ENCODE measurements at regions of chr4 and their contacts with region 1.

Region 1: GRCh38 chr4:3388471-3389232 is 53.1 kb upstream of the HGFAC start:
- DNase-seq: no peak
- ATAC-seq: peak; percentile 72
- H3K4me3 Mint-ChIP-seq: peak overlapping the region; percentile 83
- H3K27ac Mint-ChIP-seq: peak overlapping the region; percentile 95
- H3K4me1 Mint-ChIP-seq: peaks cover 51% of the 10 kb centered on the region
- H3K27me3 Mint-ChIP-seq: peaks cover 5% of the 10 kb centered on the region
- CTCF ChIP-seq: no peak

Region 2: DNA sequence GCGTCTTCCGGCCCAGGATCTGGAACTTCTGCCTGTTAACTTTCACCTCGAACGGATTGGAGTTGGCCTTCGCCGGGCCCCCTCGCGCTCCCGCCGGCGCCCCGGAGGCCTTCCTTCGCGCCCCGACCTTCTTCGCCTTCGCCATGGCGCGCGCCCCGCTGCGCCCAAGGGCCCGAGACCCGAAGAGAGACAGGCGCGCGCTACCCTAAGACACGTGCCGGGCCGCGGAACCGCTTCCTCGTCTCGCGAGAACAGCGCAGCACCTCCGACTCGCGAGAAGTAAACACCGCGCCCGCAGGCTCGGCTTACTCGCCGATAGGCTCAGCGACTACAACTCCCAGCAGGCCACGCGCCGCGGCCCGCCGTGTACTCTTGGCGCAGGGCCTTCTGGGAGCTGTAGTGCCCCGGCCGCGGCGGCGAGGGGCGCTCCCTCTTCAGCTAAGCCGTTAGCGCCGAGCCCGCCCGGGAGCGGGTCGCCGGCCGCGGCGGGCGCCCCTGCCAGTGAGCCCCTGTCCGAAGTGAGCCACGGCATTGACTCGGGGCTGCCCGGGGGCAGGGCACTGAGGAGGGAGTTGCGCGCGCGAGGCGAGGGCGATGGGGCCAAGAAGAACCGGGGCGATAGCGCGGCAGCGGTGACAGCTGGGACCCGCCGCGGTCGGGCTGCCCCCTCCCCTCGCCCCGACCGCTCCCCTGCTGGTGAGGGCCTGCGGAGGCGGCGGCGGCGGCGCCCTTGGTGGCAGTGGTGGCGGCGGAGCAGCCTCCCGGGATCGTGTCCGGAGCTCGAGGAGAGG is 425.3 kb before region 1 on chr4 and contains the starts of genes GRK4 and NOP14:
- CTCF ChIA-PET with region 1: no interaction called
- POLR2A ChIA-PET with region 1: no interaction called
- intact Hi-C with region 1: loop called (anchors 5 kb)
- DNase-seq: peak; percentile 89
- ATAC-seq: peak; percentile 91
- H3K4me3 Mint-ChIP-seq: peak within 1 kb of the TSS; percentile 91
- H3K27ac Mint-ChIP-seq: peak within 1 kb of the TSS; percentile 92
- H3K4me1 Mint-ChIP-seq: peaks cover 29% of the 10 kb centered on the region
- H3K27me3 Mint-ChIP-seq: no peaks in the 10 kb centered on the region
- CTCF ChIP-seq: no peak
- total RNA-seq, gene GRK4: 1.4 and 2.1 TPM in 2 replicates
- total RNA-seq, gene NOP14: 56.3 and 57.3 TPM in 2 replicates

Region 3: DNA sequence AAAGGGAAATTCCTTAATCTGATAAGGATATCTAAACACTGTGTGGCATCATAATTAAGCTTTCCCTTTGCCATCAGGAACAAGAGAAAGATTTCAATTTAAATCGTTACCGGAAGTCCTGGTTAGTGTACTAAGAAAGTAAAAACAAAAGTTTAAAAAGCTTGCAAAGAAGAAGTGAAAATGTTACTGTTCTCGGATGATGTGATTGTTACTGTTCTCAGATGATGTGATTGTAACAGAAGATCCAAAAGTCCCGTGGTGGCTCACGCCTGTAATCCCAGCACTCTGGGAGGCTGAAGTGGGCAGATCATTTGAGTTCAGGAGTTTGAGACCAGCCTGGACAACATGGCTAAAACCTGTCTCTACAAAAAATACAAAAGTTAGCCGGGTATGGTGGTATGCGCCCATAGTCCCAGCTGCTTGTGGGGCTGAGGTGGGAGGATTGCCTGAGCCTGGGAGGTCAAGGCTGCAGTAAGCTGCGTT is 33.3 kb before region 1 on chr4:
- CTCF ChIA-PET with region 1: interaction called, 4 read pairs
- POLR2A ChIA-PET with region 1: interaction called, 44 read pairs
- intact Hi-C with region 1: loop called (anchors 1 kb)
- DNase-seq: no peak
- ATAC-seq: peak; percentile 89
- H3K4me3 Mint-ChIP-seq: peak overlapping the region; percentile 67
- H3K27ac Mint-ChIP-seq: peak overlapping the region; percentile 91
- H3K4me1 Mint-ChIP-seq: peaks cover 44% of the 10 kb centered on the region
- H3K27me3 Mint-ChIP-seq: no peaks in the 10 kb centered on the region
- CTCF ChIP-seq: no peak

Region 4: GRCh38 chr4:3399277-3400194 is 10.9 kb after region 1 on chr4:
- CTCF ChIA-PET with region 1: interaction called, 4 read pairs
- POLR2A ChIA-PET with region 1: interaction called, 6 read pairs
- intact Hi-C with region 1: loop called (anchors 1 kb)
- DNase-seq: no peak
- ATAC-seq: no peak
- H3K4me3 Mint-ChIP-seq: no peak overlapping the region
- H3K27ac Mint-ChIP-seq: no peak overlapping the region
- H3K4me1 Mint-ChIP-seq: peaks cover 13% of the 10 kb centered on the region
- H3K27me3 Mint-ChIP-seq: no peaks in the 10 kb centered on the region
- CTCF ChIP-seq: no peak

Region 5: DNA sequence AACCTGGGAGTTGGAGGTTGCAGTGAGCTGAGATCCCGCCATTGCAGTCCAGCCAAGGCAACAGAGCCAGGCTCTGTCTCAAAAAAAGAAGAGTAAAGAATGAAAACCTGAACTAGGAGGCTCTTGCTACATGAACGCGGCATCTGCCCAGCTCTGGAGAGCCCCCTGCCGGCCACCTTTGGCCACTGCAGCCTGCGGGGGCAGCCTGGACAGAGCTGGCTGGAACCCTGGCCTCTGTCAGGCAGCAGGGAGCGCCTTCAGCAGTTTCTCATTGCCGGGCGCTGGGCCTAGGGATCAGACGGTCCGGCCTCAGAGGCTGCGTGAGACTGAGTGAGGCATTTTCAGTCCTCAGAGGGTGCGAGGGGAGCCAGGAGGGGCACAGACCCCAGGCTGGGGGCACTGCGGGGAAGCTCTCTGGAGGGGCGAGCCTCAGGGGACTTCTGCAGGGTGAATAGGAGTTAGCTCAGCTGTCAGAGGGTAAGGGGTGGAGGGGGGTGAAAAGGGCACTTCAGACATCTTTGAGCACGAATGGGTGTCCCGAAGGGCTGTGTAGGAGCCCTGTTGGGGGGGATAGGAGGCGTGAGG is 92.0 kb after region 1 on chr4:
- CTCF ChIA-PET with region 1: no interaction called
- POLR2A ChIA-PET with region 1: interaction called, 3 read pairs
- intact Hi-C with region 1: loop called (anchors 5 kb)
- DNase-seq: peak; percentile 81
- ATAC-seq: peak; percentile 47
- H3K4me3 Mint-ChIP-seq: no peak overlapping the region
- H3K27ac Mint-ChIP-seq: no peak overlapping the region
- H3K4me1 Mint-ChIP-seq: peaks cover 39% of the 10 kb centered on the region
- H3K27me3 Mint-ChIP-seq: peaks cover 2% of the 10 kb centered on the region
- CTCF ChIP-seq: peak; percentile 80

Region 6: GRCh38 chr4:3514806-3515460 is 126.3 kb after region 1 on chr4:
- CTCF ChIA-PET with region 1: no interaction called
- POLR2A ChIA-PET with region 1: no interaction called
- intact Hi-C with region 1: no loop called
- DNase-seq: no peak
- ATAC-seq: no peak
- H3K4me3 Mint-ChIP-seq: no peak overlapping the region
- H3K27ac Mint-ChIP-seq: no peak overlapping the region
- H3K4me1 Mint-ChIP-seq: no peaks in the 10 kb centered on the region
- H3K27me3 Mint-ChIP-seq: no peaks in the 10 kb centered on the region
- CTCF ChIP-seq: no peak

Region 7: GRCh38 chr4:3644849-3645621 is 256.4 kb after region 1 on chr4:
- CTCF ChIA-PET with region 1: no interaction called
- POLR2A ChIA-PET with region 1: no interaction called
- intact Hi-C with region 1: no loop called
- DNase-seq: no peak
- ATAC-seq: no peak
- H3K4me3 Mint-ChIP-seq: no peak overlapping the region
- H3K27ac Mint-ChIP-seq: no peak overlapping the region
- H3K4me1 Mint-ChIP-seq: no peaks in the 10 kb centered on the region
- H3K27me3 Mint-ChIP-seq: peaks cover 4% of the 10 kb centered on the region
- CTCF ChIP-seq: no peak

Region 8: DNA sequence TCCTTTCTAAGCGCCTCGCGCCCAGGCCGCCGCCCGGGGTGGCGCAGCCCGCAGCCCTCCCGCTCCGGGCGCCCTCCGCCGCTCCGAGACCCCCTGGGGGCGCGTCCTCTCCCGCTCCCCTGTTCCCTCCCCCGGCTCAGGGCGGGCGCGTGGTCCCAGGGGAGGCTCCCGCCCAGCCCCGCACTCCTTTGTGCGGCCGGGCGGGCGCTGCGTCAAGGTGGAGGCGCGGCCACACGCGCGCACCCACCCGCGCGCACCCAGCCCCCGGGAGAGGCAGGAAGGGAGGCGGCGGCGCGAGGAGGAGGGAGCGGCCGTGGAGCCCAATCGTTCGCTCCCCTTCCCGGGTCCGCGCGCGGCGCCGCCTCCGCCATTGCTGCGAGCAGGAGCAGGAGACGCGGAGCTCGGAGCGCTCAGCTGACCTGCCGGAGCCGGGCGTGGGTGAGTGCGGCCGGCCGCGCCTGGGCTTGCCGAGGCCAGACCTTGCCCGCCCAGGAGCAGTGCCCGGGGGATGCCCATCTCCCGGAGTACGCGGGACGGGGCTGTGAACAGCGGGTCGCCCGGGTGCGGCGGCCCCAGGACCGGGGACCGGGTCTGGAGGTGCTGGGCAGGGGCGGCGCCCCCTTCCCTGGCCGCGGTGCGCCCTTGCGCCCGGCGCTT is 998.2 kb after region 1 on chr4 and contains the start of gene NSG1:
- CTCF ChIA-PET with region 1: no interaction called
- POLR2A ChIA-PET with region 1: no interaction called
- intact Hi-C with region 1: no loop called
- DNase-seq: no peak
- ATAC-seq: no peak
- H3K4me3 Mint-ChIP-seq: peak within 1 kb of the TSS; percentile 49
- H3K27ac Mint-ChIP-seq: no peak within 1 kb of the TSS
- H3K4me1 Mint-ChIP-seq: peaks cover 14% of the 10 kb centered on the region
- H3K27me3 Mint-ChIP-seq: peaks cover 38% of the 10 kb centered on the region
- CTCF ChIP-seq: no peak
- total RNA-seq, gene NSG1: not detected in 2 replicates